ENCODE measurements at regions of chr3 and their contacts with region 1.

Region 1: DNA sequence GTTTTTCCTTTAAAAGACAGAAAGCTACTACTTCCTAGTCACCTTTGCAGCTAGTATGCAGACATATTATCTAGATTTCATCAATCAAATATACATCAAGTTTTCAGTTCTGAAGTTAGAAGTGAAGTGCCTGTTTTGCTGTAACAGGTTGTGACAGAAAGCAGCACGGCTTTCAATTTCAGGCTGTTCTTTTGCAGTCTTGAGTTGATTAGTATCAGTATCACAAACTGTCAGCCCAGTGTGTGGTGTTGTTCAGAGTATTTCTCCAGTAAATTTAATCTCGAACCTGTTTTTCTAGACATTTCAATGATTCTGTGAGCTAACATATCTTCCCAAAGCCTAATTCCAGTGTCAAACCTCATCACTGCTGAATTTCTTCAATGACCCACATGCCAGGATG is 1050.8 kb downstream of the DIPK2A start:
- DNase-seq: no peak
- ATAC-seq: no peak

Region 2: GRCh38 chr3:145035682-145036081 is 13.2 kb after region 1 on chr3:
- intact Hi-C with region 1: loop called (anchors 1 kb)
- DNase-seq: no peak
- ATAC-seq: no peak